ENCODE measurements at regions of chr5 and their contacts with region 1.

Region 1: DNA sequence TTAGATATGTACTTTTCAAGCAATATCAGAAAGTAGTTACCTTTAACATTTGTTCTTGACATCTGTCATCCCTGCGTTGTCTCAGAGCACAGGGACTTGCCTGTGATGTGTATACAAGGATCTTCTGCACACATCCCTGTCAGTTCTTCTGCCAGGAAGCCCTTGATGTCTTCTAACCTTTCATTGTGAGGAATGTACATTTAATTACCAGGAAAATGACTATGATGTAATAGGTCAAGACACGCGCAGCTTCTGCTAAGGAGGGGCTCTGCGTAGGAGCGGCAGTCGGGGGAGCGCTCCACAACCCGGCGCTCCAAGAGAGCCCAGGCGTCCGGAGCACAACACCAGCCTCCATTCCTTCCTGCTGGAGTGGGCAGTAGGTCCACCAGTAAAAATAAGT is 119.7 kb downstream of the IRX2 start:
- DNase-seq: no peak
- H3K4me3 ChIP-seq: no peak overlapping the region
- H3K27ac ChIP-seq: no peak overlapping the region
- H3K4me1 ChIP-seq: no peaks in the 10 kb centered on the region
- H3K27me3 ChIP-seq: no peaks in the 10 kb centered on the region
- CTCF ChIP-seq: no peak
- POLR2A ChIP-seq: no peak

Region 2: DNA sequence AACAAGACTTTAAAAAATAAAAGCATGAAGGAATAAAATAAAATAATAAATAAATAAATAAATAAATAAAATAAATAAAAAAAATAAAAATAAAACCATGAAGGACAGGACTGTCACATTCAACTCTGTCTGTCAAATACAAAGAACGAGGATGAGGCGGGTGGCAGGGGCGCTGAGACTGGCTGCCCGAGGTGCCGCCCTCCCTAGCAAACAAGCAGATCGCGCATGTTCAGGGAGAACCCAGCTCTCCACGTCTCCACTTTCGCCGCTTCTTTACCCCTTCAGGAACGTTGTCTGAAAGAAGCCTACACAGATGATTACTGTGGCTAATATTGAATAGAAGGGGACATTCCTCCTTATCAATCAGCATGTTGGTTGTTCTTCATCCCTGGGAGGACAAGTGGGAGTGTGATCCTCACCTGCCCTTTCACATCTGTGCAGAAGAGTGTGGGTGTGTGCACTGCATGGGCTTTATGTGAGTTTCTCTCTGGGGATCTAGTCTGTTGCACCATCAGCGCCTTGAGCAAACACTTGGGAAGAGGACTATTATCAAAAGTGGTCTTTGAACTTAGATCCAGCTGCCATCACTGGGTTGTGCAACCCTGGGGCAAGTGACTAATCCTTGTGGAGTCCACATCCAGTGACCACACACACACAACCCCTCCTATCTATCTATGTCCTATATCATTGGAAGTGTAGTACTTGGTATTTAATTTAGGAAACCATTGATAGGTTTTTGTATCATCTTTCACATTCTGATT is 279.5 kb before region 1 on chr5:
- intact Hi-C with region 1: no loop called
- DNase-seq: no peak
- H3K4me3 ChIP-seq: no peak overlapping the region
- H3K27ac ChIP-seq: no peak overlapping the region
- H3K4me1 ChIP-seq: no peaks in the 10 kb centered on the region
- H3K27me3 ChIP-seq: no peaks in the 10 kb centered on the region
- CTCF ChIP-seq: no peak
- POLR2A ChIP-seq: no peak

Region 3: GRCh38 chr5:2666081-2666480 is 34.3 kb after region 1 on chr5:
- intact Hi-C with region 1: loop called (anchors 2 kb)
- DNase-seq: no peak
- H3K4me3 ChIP-seq: no peak overlapping the region
- H3K27ac ChIP-seq: no peak overlapping the region
- H3K4me1 ChIP-seq: no peaks in the 10 kb centered on the region
- H3K27me3 ChIP-seq: no peaks in the 10 kb centered on the region
- CTCF ChIP-seq: no peak
- POLR2A ChIP-seq: no peak

Measured in breast epithelium (tissue), 4 donors.